Tibial artery (tissue), 4 donors: ENCODE measurements at regions of chr5 and their contacts with region 1.

Region 1: DNA sequence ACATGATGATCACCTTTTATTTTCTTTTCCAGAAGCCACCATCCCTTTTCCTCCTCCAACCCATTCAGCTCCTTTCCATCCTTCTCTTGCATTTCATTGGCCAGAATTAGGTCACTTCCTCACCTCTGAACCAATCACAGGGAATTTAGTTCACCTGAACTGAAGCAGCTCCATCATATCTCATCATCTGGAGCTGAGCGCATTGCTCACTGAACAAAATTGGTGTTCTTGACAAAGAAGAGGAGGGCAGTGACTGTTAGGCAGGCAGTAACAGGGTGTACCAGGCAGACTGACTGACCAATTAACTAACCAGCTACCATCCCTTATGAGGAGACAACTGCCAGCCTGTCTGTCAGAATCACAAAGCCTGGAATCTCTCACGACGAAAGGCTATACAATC is 1.8 kb upstream of the ZNF354A start:
- DNase-seq: no peak
- H3K4me3 ChIP-seq: no peak overlapping the region
- H3K27ac ChIP-seq: no peak overlapping the region
- H3K4me1 ChIP-seq: peaks cover 0 to 10% (median 3%) of the 10 kb centered on the region in 4 donors
- H3K27me3 ChIP-seq: no peaks in the 10 kb centered on the region
- CTCF ChIP-seq: no peak

Region 2: GRCh38 chr5:178626484-178627258 is 105.6 kb before region 1 on chr5 and contains the start of gene CLK4:
- intact Hi-C with region 1: loop called (anchors 10 kb)
- DNase-seq: peak; percentile 95 to 97
- H3K4me3 ChIP-seq: peak within 1 kb of the TSS; percentile 73 to 80
- H3K27ac ChIP-seq: peak within 1 kb of the TSS; percentile 89 to 97
- H3K4me1 ChIP-seq: peaks cover 0 to 40% (median 20%) of the 10 kb centered on the region in 4 donors
- H3K27me3 ChIP-seq: no peaks in the 10 kb centered on the region
- CTCF ChIP-seq: peak in 1 of 2 experiments; percentile 17

Region 3: DNA sequence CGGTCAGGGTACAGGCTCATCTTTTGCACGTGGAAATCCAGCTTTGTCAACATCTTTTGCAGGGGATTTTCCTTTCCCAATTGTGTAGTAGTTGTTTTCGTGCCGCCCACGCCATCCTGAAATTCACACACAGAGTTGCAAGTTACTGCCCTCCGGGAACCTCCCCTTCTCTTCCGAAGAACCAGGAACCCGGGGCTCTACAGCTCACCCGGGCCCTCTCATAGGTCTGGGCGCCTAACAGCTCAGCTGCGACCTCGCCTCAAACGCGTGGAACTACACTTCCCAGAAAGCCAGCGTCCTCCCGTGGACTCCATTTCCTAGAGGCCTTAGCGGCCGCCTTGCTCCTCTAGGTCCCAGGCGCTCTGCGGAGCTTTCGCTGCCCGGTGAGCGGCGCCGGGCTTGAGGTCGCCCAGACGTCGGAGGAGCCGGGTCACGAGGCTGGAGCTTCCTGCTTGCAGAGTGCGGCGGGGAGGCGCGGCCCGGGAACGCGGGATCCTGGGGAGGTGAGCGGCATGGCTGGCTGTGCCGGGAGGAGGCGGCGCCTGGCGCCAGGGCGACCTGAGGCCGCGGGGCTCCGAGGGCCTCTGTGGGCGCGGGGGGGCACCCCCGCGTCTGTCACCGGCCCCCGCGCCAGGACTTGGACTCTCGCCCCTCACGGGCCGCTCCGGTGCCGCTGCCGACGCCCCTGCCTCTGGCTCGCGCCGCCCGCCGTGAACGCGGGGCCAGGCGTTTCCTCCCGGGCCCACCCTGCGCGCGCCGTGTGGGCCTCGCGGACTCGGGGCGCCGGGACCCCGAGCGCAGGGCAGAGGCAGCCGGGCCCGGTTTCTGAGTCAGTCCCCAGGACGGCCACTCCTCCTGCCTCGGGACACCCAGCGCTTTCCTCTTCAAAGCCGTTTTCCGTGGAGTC is 127.6 kb after region 1 on chr5 and contains the start of gene ZNF354B:
- intact Hi-C with region 1: loop called (anchors 2 kb)
- DNase-seq: peak; percentile 89 to 94
- H3K4me3 ChIP-seq: peak within 1 kb of the TSS; percentile 82 to 99
- H3K27ac ChIP-seq: peak within 1 kb of the TSS; percentile 82 to 92
- H3K4me1 ChIP-seq: peaks cover 0 to 17% (median 8%) of the 10 kb centered on the region in 4 donors
- H3K27me3 ChIP-seq: no peaks in the 10 kb centered on the region
- CTCF ChIP-seq: no peak

Region 4: DNA sequence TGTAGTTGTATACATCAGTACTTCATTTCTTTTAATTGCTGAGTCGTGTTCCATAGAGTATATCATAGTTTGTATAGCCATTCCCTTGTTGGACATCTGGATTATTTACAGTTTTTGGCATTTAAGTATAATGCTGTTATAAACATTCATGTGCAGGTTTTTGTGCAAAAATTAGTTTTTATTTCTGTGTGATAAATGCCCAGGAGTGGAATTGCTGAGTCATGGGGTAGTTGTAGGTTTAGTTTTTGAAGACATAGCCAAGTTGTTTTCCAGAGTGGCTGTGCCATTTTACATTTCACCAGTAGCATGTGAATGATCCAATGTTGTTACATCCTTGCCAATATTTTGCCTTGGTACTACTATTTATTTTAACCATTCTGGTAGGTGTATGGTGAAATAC is 140.0 kb after region 1 on chr5:
- intact Hi-C with region 1: no loop called
- DNase-seq: no peak
- H3K4me3 ChIP-seq: no peak overlapping the region
- H3K27ac ChIP-seq: no peak overlapping the region
- H3K4me1 ChIP-seq: no peaks in the 10 kb centered on the region
- H3K27me3 ChIP-seq: no peaks in the 10 kb centered on the region
- CTCF ChIP-seq: no peak

Region 5: GRCh38 chr5:179060116-179061008 is 328.1 kb after region 1 on chr5 and contains the start of gene ZNF354C:
- intact Hi-C with region 1: loop called (anchors 10 kb)
- DNase-seq: peak; percentile 87 to 92
- H3K4me3 ChIP-seq: peak within 1 kb of the TSS; percentile 82 to 84
- H3K27ac ChIP-seq: peak within 1 kb of the TSS; percentile 80 to 81
- H3K4me1 ChIP-seq: peaks cover 7 to 14% (median 11%) of the 10 kb centered on the region in 4 donors
- H3K27me3 ChIP-seq: no peaks in the 10 kb centered on the region
- CTCF ChIP-seq: no peak

Region 6: DNA sequence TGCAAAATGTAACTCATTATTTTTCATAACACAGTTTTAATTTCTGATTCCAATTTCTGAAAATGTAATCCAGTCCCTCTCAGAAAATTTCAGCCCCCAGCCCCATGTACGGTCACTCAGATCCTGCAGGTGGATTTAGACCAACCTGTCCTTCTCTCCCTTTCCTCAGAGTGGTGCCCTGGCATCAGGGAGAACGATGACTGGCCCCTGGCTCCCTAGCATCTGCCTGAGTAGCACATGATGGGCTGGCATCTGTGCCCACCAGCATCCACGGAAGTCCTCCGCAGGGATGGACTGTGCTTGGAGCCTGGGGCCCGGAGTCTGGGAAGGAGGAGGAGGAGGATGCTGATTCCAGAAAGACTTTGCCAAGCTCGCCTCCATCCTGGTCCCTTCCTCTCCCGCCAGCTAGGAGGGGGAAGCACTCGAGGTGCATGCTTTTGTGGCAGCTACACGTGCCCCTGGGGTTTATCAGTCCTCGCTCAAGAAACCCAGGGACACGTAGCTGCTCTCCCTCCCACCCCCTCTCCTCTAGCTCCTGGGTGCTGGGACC is 763.7 kb after region 1 on chr5:
- intact Hi-C with region 1: loop called (anchors 10 kb)
- DNase-seq: no peak
- H3K4me3 ChIP-seq: no peak overlapping the region
- H3K27ac ChIP-seq: no peak overlapping the region
- H3K4me1 ChIP-seq: no peaks in the 10 kb centered on the region
- H3K27me3 ChIP-seq: peaks cover 0 to 26% of the 10 kb centered on the region in 2 donors
- CTCF ChIP-seq: no peak